ENCODE measurements at regions of chr16 and their contacts with region 1.

Region 1: DNA sequence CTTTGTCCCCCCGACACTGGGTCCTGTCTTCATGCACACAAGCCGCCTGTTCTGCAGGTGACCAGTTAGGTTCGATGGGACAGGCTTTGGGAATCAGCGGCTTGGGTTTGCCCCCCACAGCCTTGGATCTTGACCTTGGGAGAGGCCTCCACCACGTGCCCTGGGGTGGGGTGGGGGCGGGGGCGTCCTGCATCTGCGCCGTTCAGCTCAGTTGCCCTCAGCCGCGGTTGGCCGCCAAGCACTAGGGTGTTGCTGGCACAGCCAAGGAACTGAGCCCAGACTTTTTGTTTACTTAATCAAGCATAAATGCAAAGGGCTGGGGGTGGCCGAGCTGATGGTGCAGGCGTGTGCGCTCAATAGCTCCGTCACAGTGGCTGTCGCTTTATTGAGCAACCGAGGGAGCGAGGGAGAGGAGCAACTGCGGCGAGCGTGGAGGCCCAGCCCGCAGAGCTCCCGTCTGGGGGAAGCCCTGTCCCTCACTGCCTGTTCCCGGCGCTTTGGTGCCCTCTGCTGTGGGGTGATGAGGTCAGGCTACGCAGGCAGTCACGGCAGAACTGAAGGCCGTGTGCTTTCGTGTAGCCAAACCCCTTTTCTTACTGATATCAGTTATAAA is 33.9 kb downstream of the JPH3 start:
- DNase-seq: peak; percentile 71 to 82 (median 73)
- H3K4me3 ChIP-seq: peak overlapping the region in 1 of 2 donors; percentile 59
- H3K4me3 Mint-ChIP-seq: peak overlapping the region; percentile 82 to 95 (median 88)
- H3K27ac ChIP-seq: peak overlapping the region; percentile 20
- H3K27ac Mint-ChIP-seq: peak overlapping the region in 6 of 7 donors; percentile 13 to 87 (median 71)
- H3K4me1 ChIP-seq: peaks cover 20% of the 10 kb centered on the region
- H3K4me1 Mint-ChIP-seq: peaks cover 4 to 21% (median 11%) of the 10 kb centered on the region in 4 donors
- H3K27me3 ChIP-seq: no peaks in the 10 kb centered on the region
- H3K27me3 Mint-ChIP-seq: peaks cover under 1 to 4% of the 10 kb centered on the region in 2 donors

Region 2: DNA sequence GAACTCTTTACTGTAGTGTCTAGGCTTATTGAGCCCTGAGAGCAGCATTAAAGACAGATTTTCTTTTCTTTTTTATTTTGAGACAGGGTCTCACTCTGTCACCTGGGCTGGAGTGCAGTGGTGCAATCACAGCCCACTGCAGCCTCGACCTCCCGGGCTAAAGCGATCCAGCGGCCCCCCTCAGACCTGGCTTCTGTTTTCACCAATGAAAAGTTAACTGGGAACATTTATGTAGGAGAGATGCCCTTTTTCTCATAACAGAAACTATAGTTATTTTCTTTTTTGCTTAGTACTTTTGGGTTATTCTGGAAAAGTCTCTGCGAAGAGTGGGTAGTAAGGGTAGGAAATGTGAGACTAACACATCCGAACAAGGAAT is 242.5 kb before region 1 on chr16:
- CTCF ChIA-PET with region 1: interaction called, 10 read pairs
- POLR2A ChIA-PET with region 1: interaction called, 4 read pairs
- intact Hi-C with region 1: loop called (anchors 1 kb)
- DNase-seq: no peak
- H3K4me3 ChIP-seq: peak overlapping the region in 1 of 2 donors; percentile 81
- H3K4me3 Mint-ChIP-seq: peak overlapping the region; percentile 88 to 98 (median 94)
- H3K27ac ChIP-seq: peak overlapping the region; percentile 82
- H3K27ac Mint-ChIP-seq: peak overlapping the region; percentile 88 to 96 (median 94)
- H3K4me1 ChIP-seq: peaks cover 47% of the 10 kb centered on the region
- H3K4me1 Mint-ChIP-seq: peaks cover 32 to 62% (median 47%) of the 10 kb centered on the region in 4 donors
- H3K27me3 ChIP-seq: no peaks in the 10 kb centered on the region
- H3K27me3 Mint-ChIP-seq: no peaks in the 10 kb centered on the region

Region 3: GRCh38 chr16:87492721-87493607 is 143.2 kb before region 1 on chr16 and contains the start of gene ZCCHC14:
- CTCF ChIA-PET with region 1: no interaction called
- POLR2A ChIA-PET with region 1: no interaction called
- intact Hi-C with region 1: loop called (anchors 5 kb)
- DNase-seq: peak; percentile 99
- H3K4me3 ChIP-seq: peak within 1 kb of the TSS; percentile 34 to 73
- H3K4me3 Mint-ChIP-seq: peak within 1 kb of the TSS; percentile 88 to 98 (median 92)
- H3K27ac ChIP-seq: peak within 1 kb of the TSS; percentile 49
- H3K27ac Mint-ChIP-seq: peak within 1 kb of the TSS; percentile 81 to 96 (median 93)
- H3K4me1 ChIP-seq: peaks cover 64% of the 10 kb centered on the region
- H3K4me1 Mint-ChIP-seq: peaks cover 32 to 72% (median 48%) of the 10 kb centered on the region in 4 donors
- H3K27me3 ChIP-seq: no peaks in the 10 kb centered on the region
- H3K27me3 Mint-ChIP-seq: no peaks in the 10 kb centered on the region
- total RNA-seq, gene ZCCHC14: 22.7 to 25.1 TPM

Region 4: GRCh38 chr16:87621976-87622713 is 14.0 kb before region 1 on chr16:
- CTCF ChIA-PET with region 1: interaction called, 12 read pairs
- POLR2A ChIA-PET with region 1: no interaction called
- intact Hi-C with region 1: no loop called
- DNase-seq: no peak
- H3K4me3 ChIP-seq: no peak overlapping the region
- H3K4me3 Mint-ChIP-seq: no peak overlapping the region
- H3K27ac ChIP-seq: no peak overlapping the region
- H3K27ac Mint-ChIP-seq: no peak overlapping the region
- H3K4me1 ChIP-seq: no peaks in the 10 kb centered on the region
- H3K4me1 Mint-ChIP-seq: no peaks in the 10 kb centered on the region
- H3K27me3 ChIP-seq: no peaks in the 10 kb centered on the region
- H3K27me3 Mint-ChIP-seq: peaks cover 5 to 7% of the 10 kb centered on the region in 2 donors

Region 5: DNA sequence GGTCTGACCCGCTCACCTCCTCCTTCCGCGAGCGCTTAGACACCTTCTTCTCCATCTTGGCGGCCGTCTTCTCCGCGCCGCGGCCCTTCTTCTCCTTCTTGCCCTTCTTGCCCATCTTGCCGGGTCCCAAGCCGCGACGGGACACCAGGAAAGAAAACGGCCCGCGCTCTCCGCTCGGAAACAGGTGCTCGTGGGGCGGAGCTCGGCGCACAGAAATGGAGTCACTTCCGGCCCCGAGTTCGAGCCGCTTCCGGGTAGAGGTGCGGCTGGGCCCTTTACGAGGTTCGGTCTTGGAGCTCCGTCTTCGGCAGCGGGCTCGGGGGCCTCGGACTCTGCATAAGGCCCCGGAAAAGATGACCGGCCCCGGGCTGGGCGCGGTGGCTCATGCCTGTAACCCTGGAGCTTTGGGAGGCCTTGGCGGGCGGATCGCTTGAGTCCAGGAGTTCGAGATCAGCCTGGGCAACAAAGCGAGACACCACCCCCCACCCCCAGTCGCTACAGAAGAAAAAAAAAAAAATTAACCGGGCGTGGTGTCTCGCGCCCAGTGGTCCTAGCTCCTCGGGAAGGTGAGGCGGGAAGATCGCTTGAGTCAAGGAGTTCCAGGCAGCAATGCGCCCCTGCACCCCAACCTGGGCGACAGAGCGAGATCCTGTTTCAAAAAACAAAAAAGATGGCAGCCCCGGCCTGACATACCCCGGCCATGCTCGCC is 129.8 kb after region 1 on chr16 and contains the start of gene KLHDC4:
- CTCF ChIA-PET with region 1: interaction called, 12 read pairs
- POLR2A ChIA-PET with region 1: interaction called, 3 read pairs
- intact Hi-C with region 1: loop called (anchors 1 kb)
- DNase-seq: peak; percentile 87 to 91 (median 88)
- H3K4me3 ChIP-seq: peak within 1 kb of the TSS; percentile 7 to 80
- H3K4me3 Mint-ChIP-seq: peak within 1 kb of the TSS; percentile 97 to 100 (median 100)
- H3K27ac ChIP-seq: peak within 1 kb of the TSS; percentile 85
- H3K27ac Mint-ChIP-seq: peak within 1 kb of the TSS; percentile 98 to 100 (median 99)
- H3K4me1 ChIP-seq: peaks cover 44% of the 10 kb centered on the region
- H3K4me1 Mint-ChIP-seq: peaks cover 25 to 51% (median 39%) of the 10 kb centered on the region in 4 donors
- H3K27me3 ChIP-seq: no peaks in the 10 kb centered on the region
- H3K27me3 Mint-ChIP-seq: no peaks in the 10 kb centered on the region
- total RNA-seq, gene KLHDC4: 82.4 to 90.0 TPM

Measured in CD4-positive, alpha-beta memory T cell (primary cell).